Cardiac septum (tissue), 1 donor: ENCODE measurements at regions of chr3 and their contacts with region 1.

Region 1: DNA sequence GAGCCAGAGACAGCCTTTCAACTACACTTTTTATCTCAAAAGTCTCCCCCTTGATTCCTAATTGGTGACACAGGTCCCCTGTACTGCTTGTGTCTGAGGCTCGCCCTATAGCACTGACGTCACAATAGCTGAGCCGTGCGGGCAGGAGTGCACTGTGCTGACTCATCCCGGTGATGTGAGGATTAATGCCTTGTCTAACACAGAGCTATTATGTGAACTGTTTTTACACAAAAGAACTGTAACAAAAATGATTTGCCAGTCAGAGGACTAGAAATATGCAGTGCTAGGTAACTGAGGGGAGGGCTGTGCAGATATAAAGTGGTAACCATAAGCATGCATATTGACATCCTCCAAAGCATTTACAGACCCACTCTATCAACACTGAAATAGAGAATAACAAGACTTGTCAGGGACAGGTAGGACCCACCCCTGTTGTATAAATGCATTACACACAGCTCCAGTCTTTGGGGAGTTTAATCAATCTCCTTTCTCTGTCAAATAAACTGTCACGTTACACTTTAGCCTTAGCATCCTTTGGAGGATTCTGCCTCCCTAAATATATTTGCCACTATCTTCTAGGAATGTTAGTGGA is 205.0 kb downstream of the TIGIT start:
- DNase-seq: no peak

Region 2: GRCh38 chr3:114404590-114404989 is 94.3 kb before region 1 on chr3:
- intact Hi-C with region 1: loop called (anchors 5 kb)
- DNase-seq: no peak

Region 3: DNA sequence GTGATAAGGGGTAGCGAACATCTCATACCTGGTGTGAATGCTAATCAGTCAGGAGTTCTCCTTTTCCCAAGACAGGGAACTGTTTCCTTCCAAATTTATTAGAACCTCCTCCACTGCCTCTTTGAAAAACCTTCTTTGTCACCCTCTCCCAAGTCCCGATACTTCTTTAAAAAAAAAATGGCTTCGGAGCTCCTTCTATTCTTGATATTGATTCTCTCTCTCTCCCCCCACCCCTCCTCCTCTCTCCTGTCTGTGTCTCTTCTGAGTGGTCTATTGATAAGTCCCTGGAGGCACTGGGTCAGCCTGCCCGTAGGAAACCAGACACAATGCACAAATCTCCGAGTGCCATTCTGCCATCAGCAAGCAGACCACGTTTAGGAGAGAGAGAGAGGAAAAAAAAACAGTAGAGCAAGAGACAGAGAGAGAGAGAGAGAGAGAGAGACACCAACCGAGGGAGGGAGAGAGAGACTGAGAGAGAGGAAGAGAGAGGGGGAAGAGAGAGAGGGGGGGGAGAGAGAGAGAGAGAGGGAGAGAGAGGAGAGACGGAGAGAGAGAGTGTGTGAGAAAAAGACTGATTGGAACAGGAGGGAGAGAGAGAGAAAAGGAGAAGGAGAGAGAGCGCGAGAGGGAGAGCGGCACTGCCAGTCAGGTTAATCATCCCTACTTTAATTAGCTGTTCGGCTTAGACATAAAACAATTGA is 44.2 kb before region 1 on chr3:
- intact Hi-C with region 1: loop called (anchors 5 kb)
- DNase-seq: no peak